Sciatic nerve (tissue), 2 donors: ENCODE measurements at regions of chr1 and their contacts with region 1.

Region 1: GRCh38 chr1:152440635-152441471 is 26.8 kb upstream of the CRNN start:
- DNase-seq: peak; percentile 76
- ATAC-seq: peak; percentile 88

Region 2: DNA sequence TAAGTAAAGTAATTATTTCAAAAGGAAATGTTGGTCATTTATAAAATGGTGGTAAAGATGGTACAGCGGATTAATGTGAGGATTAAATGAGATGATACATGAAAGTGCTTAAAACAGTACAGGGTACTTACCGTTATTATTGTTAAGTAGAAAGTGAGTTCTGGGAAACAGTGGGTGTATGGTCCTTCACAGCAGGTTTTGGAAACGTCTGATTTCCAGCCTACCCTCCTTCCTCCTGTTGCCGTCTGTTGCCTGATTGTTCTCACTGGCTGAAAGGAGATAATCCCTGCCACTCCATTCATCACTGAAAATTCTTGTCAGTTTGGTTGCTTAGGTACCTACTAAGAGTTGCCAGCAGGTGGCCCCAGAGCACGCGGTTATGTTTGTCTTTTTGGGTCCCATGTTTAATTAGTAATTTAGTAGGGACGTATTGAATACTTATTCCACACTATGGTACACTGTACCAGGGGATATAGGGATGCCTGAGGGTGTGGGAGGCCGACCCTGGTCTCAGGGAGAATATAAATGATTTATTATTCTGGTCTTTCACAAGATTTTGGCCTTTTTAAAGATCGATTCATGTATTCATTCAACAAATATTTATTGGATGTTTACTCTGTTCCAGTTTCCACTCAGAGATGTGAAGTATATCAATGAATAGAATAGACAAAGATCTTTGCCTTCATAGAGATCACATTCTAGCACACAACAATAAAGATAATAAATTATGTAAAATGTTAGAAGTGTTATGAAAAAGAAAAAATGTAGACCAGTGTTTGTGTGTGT is 251.0 kb before region 1 on chr1:
- intact Hi-C with region 1: loop called (anchors 10 kb)
- DNase-seq: peak; percentile 76
- ATAC-seq: peak; percentile 76